BJ (cell line): ENCODE measurements at regions of chr12 and their contacts with region 1.

Region 1: DNA sequence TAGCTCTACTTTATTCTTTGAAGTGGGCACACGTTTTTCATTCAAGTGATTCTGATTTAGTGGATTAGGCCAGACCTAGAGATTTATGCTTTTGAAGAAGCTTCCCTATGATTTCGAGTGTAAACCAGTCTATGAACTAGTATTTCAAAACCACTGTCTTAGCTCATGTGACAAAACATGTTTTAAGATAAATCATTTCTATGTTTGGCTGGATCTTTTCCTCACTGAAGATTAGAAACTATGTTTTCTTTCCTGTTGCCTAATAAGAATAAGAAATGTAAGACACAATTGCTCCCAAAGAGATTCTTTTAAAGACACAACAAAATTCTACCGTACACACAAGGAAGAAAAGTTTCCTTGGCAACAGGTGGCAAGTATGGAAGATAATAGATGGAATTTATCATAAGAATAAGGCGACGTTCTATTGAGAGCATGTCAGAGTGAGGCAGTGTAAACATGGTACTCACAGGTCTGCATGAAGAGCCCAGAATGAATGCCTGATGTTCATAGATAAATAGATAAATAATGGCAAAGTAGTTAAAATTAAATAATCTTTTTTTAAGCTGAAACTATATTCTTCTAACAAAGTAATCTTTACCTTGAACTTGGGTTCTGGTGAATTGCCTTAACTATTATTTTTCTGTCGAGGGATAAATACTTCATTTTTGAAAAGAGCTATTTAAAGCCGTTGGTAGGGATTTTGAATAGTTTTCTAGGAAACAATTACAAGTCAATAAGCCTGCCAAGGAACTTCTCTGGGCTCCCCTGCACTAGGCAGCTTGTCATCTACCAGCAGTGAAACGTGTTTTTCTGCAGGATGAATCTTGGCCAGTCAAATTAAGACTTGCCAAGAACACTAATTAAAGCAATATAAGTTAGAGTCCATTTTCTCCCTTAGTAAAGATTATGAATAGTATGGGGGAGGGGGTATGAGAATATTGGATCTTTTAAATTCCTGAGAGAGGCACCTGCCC is 34.1 kb upstream of the C12orf75 start:
- DNase-seq: no peak
- H3K4me3 ChIP-seq: no peak overlapping the region
- H3K27me3 ChIP-seq: no peaks in the 10 kb centered on the region
- CTCF ChIP-seq: no peak

Region 2: DNA sequence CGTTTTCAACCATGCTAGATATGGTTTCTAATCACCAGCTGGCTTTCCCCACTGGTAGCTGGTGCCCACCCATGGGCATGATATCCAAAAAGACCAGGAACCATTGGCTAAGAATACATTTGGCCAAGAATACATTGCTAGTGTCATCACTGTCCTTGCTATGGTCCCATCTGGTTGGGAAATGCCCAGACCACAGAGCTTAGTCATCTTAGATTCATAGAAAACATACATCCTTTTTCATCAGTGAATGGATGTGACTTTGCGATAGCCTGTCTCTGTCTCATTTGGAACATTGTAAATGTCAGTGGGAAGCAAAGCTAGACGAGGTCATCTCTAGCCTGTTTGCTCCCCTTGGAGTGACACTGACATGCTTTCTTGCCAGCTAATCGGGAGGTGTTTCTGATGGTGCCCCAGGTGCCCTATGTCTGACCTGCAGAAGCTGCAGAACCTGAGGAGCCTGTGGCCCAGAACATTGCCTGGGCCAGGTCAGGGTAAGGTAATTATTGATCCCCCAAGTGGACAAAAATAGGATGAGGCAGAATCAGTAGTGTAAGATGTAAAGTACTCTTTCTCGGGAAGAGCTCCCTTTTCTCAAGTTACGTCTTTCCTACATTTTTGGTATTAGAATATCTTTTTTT is 533.1 kb before region 1 on chr12:
- CTCF ChIA-PET with region 1: no interaction called
- POLR2A ChIA-PET with region 1: interaction called, 10 read pairs
- DNase-seq: no peak
- H3K4me3 ChIP-seq: no peak overlapping the region
- H3K27me3 ChIP-seq: no peaks in the 10 kb centered on the region; the same call in 1 of the 2 replicates
- CTCF ChIP-seq: no peak

Region 3: DNA sequence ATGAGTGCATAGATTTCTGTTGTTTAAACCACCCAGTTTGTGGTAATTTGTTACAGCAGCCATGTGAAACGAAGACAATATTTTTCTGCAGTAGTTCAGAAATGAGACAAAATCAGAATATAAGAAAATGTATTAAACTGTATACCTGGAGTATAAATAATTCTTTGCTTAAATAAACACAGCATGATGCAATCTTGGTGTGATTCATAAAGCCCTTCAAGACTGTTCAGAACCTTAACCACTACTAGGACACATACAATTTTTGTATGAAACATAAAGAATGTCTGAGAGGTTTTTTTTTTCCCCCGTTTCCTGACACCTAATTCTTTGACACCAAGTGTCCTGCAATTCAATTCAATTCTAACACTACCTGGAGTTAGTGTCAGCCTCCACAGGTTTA is 44.6 kb after region 1 on chr12:
- CTCF ChIA-PET with region 1: no interaction called
- POLR2A ChIA-PET with region 1: no interaction called
- DNase-seq: no peak
- H3K4me3 ChIP-seq: no peak overlapping the region
- H3K27me3 ChIP-seq: no peaks in the 10 kb centered on the region
- CTCF ChIP-seq: no peak

Region 4: DNA sequence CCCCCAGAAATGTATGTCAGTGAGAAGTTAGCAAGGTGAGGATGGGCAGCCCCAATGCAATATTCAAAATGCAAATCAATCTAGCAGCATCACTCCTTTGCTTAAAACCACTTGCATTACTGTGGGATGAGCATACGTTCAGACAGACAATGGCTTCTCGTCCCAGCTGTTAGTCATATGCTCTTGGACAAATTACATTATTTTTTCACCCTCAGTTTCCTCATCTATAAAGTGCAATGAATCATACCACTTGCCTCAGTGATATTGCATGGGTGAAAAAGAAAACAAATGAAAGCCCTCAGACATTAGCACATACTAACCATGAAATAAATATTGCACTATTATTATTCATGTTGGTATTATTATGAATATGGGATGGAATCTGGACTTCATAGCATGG is 166.4 kb after region 1 on chr12:
- CTCF ChIA-PET with region 1: no interaction called
- POLR2A ChIA-PET with region 1: no interaction called
- DNase-seq: no peak
- H3K4me3 ChIP-seq: no peak overlapping the region
- H3K27me3 ChIP-seq: no peaks in the 10 kb centered on the region
- CTCF ChIP-seq: no peak